Heart left ventricle (tissue), 16 donors: ENCODE measurements at regions of chr7 and their contacts with region 1.

Region 1: GRCh38 chr7:55280031-55280454 is 85.1 kb upstream of the LANCL2 start:
- DNase-seq: peak in 4 of 5 donors; percentile 48 to 56 (median 50)
- ATAC-seq: peak; percentile 53 to 86 (median 80)
- H3K4me3 ChIP-seq: no peak overlapping the region
- H3K27ac ChIP-seq: no peak overlapping the region
- H3K4me1 ChIP-seq: no peaks in the 10 kb centered on the region
- H3K27me3 ChIP-seq: no peaks in the 10 kb centered on the region
- CTCF ChIP-seq: peak; percentile 33 to 73 (median 62)
- POLR2A ChIP-seq: no peak

Region 2: DNA sequence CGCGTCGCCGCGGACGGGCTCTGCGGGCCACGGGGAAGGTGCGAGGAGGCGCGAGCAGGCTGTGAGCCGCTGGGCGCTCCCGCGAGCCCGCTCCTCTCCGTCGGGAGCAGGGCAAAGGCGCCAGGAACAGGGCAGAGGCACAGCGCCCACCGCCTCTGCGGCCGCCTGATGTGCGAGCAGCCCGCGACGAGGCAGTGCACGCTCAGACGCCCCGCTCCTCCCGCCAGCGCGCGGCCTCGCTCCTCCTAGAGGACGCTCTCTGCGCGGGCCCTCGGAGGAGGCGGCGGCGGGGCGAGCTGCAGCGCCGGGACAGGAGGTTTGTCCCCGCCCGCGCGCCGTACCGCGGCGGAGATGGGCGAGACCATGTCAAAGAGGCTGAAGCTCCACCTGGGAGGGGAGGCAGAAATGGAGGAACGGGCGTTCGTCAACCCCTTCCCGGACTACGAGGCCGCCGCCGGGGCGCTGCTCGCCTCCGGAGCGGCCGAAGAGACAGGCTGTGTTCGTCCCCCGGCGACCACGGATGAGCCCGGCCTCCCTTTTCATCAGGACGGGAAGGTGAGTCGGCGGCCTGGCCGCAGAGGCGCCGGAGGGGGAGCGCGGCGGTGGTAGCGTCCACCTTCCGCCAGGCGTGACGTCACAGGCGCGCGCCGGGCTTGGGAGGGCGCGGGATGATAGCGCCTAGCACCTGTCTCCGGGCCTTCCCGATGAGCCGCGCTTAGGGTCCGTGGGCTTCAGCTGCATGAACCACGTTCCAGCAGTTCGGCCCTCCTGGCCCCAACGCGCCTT is 85.8 kb after region 1 on chr7:
- intact Hi-C with region 1: loop called in 2 of 10 experiments (anchors 5 to 10 kb)
- DNase-seq: peak; percentile 96 to 98 (median 97)
- ATAC-seq: peak; percentile 97 to 99 (median 99)
- H3K4me3 ChIP-seq: peak overlapping the region; percentile 73 to 100 (median 96)
- H3K27ac ChIP-seq: peak overlapping the region; percentile 95 to 100 (median 100)
- H3K4me1 ChIP-seq: peaks cover 0 to 21% (median 15%) of the 10 kb centered on the region in 12 donors
- H3K27me3 ChIP-seq: no peaks in the 10 kb centered on the region
- CTCF ChIP-seq: peak in 10 of 12 donors; percentile 5 to 52 (median 26)
- POLR2A ChIP-seq: peak in 1 of 2 donors; percentile 65

Region 3: GRCh38 chr7:55415173-55415778 is 135.2 kb after region 1 on chr7:
- intact Hi-C with region 1: loop called (anchors 1 to 2 kb)
- DNase-seq: peak; percentile 72 to 87 (median 77)
- ATAC-seq: peak in 3 of 4 donors; percentile 77 to 85 (median 82)
- H3K4me3 ChIP-seq: no peak overlapping the region
- H3K27ac ChIP-seq: no peak overlapping the region
- H3K4me1 ChIP-seq: no peaks in the 10 kb centered on the region
- H3K27me3 ChIP-seq: no peaks in the 10 kb centered on the region
- CTCF ChIP-seq: peak; percentile 73 to 89 (median 84)
- POLR2A ChIP-seq: no peak